ENCODE measurements at regions of chr6 and their contacts with region 1.

Region 1: DNA sequence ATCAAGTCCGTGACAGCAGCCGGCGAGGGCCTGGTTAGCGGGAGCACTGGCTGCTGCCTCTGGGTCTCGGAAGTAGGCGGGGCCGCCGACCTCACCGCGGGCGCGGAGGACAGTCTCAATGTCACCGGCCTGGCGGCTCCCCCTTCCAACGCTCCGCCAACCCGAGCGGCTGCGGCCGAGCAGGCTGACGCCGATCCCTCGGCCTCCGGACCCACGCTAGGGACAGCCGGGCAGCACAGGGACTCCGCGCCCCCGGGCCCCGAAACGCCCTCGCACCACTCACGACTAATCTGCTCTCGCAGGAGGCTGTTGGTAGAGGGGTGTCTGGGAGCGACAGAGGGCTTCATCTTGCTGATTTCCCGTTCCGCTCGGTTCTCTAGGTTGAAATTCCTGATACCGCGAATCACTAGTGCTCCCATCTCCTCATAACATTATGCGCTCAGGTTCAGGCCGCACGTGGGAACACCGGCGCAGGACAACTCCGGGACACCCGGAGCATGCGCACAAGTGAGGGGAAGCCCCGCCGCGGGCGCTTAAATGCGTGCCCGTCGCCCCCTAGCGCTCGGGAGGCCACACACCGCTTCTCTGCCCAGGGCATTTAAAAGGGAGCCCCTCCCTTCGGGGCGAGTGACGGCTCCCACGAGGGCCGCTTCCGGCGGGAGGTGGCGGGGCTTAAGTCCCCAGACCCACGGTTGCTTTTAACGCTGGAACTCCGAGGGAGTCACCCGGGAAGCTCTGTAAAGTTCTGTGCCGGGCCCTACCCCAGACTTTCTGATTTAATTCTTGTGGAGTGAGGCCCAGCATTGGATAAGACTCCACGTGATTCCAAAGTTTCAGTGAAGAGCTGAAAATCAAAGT is at the start of gene NDUFAF4:
- DNase-seq: peak; percentile 90
- ATAC-seq: peak; percentile 87
- H3K4me3 ChIP-seq: peak within 1 kb of the TSS; percentile 77
- H3K27ac ChIP-seq: peak within 1 kb of the TSS; percentile 61
- H3K4me1 ChIP-seq: peaks cover 17% of the 10 kb centered on the region
- H3K27me3 ChIP-seq: no peaks in the 10 kb centered on the region
- CTCF ChIP-seq: peak; percentile 79
- total RNA-seq, gene NDUFAF4: 24.2 and 34.0 TPM in 2 replicates

Region 2: GRCh38 chr6:96542702-96543101 is 354.9 kb before region 1 on chr6:
- CTCF ChIA-PET with region 1: no interaction called
- POLR2A ChIA-PET with region 1: no interaction called
- intact Hi-C with region 1: loop called (anchors 10 kb)
- DNase-seq: peak; percentile 15
- ATAC-seq: no peak
- H3K4me3 ChIP-seq: no peak overlapping the region
- H3K27ac ChIP-seq: no peak overlapping the region
- H3K4me1 ChIP-seq: no peaks in the 10 kb centered on the region
- H3K27me3 ChIP-seq: no peaks in the 10 kb centered on the region
- CTCF ChIP-seq: peak; percentile 51

Region 3: DNA sequence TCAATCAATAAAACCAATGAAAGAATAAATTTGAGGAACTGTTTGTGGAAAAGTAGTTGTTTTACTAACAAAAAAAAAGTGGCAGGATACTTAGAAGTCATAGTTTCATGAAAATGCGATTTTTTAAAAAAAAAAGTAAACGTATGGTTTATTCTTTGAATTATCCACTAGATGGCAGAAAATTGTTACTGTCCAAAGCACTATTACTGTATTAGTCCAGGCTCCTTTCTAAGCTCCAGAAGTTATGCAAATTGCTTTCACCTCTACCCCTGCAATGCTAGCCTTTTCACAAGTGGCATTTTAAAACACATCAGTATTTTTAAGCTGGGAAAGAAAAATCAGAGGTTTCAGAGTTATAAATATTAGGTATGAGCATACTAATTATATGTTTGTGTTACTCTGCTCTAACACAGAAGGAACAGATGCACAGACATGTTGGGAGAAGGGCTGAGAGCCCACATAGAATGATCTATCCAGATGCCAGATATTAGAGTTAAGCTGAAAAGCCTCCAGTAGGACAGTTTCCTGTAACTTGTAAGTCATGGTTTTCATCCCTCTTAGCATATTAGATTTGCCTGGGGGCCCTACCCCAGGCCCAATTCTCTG is 270.8 kb before region 1 on chr6:
- CTCF ChIA-PET with region 1: no interaction called
- POLR2A ChIA-PET with region 1: no interaction called
- intact Hi-C with region 1: loop called (anchors 2 kb)
- DNase-seq: peak; percentile 30
- ATAC-seq: peak; percentile 46; the same call in 1 of the 2 replicates
- H3K4me3 ChIP-seq: no peak overlapping the region
- H3K27ac ChIP-seq: no peak overlapping the region
- H3K4me1 ChIP-seq: no peaks in the 10 kb centered on the region
- H3K27me3 ChIP-seq: peaks cover 8% of the 10 kb centered on the region; the same call in 1 of the 2 replicates
- CTCF ChIP-seq: peak; percentile 49

Region 4: DNA sequence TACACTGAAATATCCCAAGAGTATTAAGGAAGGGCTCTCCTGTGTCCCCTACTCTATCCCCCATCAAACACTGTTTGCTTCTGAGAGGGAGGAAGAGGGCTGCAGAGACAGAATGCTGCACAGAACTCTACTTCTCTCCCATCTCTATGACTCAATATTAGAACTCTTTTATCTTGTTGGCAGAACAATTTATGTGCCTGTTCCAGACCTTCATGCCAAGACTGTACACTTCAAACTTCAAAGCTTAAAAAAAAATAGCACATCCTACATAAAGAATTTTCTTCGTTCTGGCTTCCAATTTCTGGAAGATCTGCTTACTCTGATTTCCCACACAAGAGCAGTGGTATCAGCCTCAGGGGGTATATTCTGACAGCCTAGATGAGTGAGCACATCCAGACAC is 40.8 kb before region 1 on chr6:
- CTCF ChIA-PET with region 1: no interaction called
- POLR2A ChIA-PET with region 1: no interaction called
- intact Hi-C with region 1: no loop called
- DNase-seq: no peak
- ATAC-seq: no peak
- H3K4me3 ChIP-seq: no peak overlapping the region
- H3K27ac ChIP-seq: no peak overlapping the region
- H3K4me1 ChIP-seq: no peaks in the 10 kb centered on the region
- H3K27me3 ChIP-seq: 0 out of 2 replicates have a peak, but pooled peaks cover 8% of the 10 kb centered on the region
- CTCF ChIP-seq: no peak

Region 5: GRCh38 chr6:96963809-96964208 is 66.2 kb after region 1 on chr6:
- CTCF ChIA-PET with region 1: no interaction called
- POLR2A ChIA-PET with region 1: no interaction called
- intact Hi-C with region 1: no loop called
- DNase-seq: no peak
- ATAC-seq: no peak
- H3K4me3 ChIP-seq: no peak overlapping the region
- H3K27ac ChIP-seq: no peak overlapping the region
- H3K4me1 ChIP-seq: no peaks in the 10 kb centered on the region
- H3K27me3 ChIP-seq: peaks cover 19% of the 10 kb centered on the region
- CTCF ChIP-seq: no peak

Region 6: GRCh38 chr6:97023982-97024381 is 126.4 kb after region 1 on chr6:
- CTCF ChIA-PET with region 1: no interaction called
- POLR2A ChIA-PET with region 1: no interaction called
- intact Hi-C with region 1: no loop called
- DNase-seq: no peak
- ATAC-seq: no peak
- H3K4me3 ChIP-seq: no peak overlapping the region
- H3K27ac ChIP-seq: no peak overlapping the region
- H3K4me1 ChIP-seq: no peaks in the 10 kb centered on the region
- H3K27me3 ChIP-seq: peaks cover 40% of the 10 kb centered on the region
- CTCF ChIP-seq: no peak

Region 7: GRCh38 chr6:97053643-97054411 is 156.2 kb after region 1 on chr6:
- CTCF ChIA-PET with region 1: no interaction called
- POLR2A ChIA-PET with region 1: no interaction called
- intact Hi-C with region 1: loop called (anchors 1 kb)
- DNase-seq: peak; percentile 41
- ATAC-seq: no peak
- H3K4me3 ChIP-seq: no peak overlapping the region
- H3K27ac ChIP-seq: no peak overlapping the region
- H3K4me1 ChIP-seq: no peaks in the 10 kb centered on the region
- H3K27me3 ChIP-seq: peaks cover 4% of the 10 kb centered on the region; the same call in 1 of the 2 replicates
- CTCF ChIP-seq: peak; percentile 65

Region 8: DNA sequence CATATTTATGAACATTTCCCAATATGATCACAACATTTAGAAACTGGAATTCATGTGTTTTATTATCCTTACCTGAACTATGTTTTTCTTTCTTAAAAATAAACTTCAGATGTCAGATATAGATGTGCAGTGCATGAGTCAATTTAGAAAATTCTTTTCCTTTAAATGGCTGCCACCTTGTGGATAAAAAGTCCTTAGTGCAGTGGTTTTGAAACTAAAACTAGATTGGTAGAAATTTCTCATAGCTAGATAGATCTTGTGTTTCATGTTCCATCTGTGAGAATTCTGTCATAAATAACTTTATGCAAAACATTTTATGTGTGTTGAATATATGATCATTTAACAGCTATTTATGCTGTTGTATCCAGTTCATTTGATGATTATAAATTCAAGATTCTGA is 161.9 kb after region 1 on chr6:
- CTCF ChIA-PET with region 1: interaction called, 5 read pairs
- POLR2A ChIA-PET with region 1: no interaction called
- intact Hi-C with region 1: loop called (anchors 1 kb)
- DNase-seq: peak; percentile 57
- ATAC-seq: peak; percentile 43
- H3K4me3 ChIP-seq: no peak overlapping the region
- H3K27ac ChIP-seq: no peak overlapping the region
- H3K4me1 ChIP-seq: no peaks in the 10 kb centered on the region
- H3K27me3 ChIP-seq: peaks cover 23% of the 10 kb centered on the region
- CTCF ChIP-seq: peak; percentile 68

Measured in PC-3 (cell line).